CD4-positive, alpha-beta memory T cell (primary cell): ENCODE measurements at regions of chr16 and their contacts with region 1.

Region 1: GRCh38 chr16:74623214-74623842 is 16.4 kb upstream of the GLG1 start:
- DNase-seq: peak in 4 of 5 donors; percentile 47 to 54 (median 52)
- H3K4me3 ChIP-seq: no peak overlapping the region
- H3K4me3 Mint-ChIP-seq: no peak overlapping the region
- H3K27ac ChIP-seq: no peak overlapping the region
- H3K27ac Mint-ChIP-seq: peak overlapping the region in 5 of 7 donors; percentile 48 to 80 (median 54)
- H3K4me1 ChIP-seq: no peaks in the 10 kb centered on the region
- H3K4me1 Mint-ChIP-seq: peaks cover 4 to 8% (median 6%) of the 10 kb centered on the region in 4 donors
- H3K27me3 ChIP-seq: no peaks in the 10 kb centered on the region
- H3K27me3 Mint-ChIP-seq: no peaks in the 10 kb centered on the region

Region 2: GRCh38 chr16:74466872-74467271 is 156.5 kb before region 1 on chr16:
- CTCF ChIA-PET with region 1: interaction called, 13 read pairs
- POLR2A ChIA-PET with region 1: no interaction called
- intact Hi-C with region 1: loop called (anchors 5 kb)
- DNase-seq: peak in 4 of 5 donors; percentile 7 to 22 (median 19)
- H3K4me3 ChIP-seq: no peak overlapping the region
- H3K4me3 Mint-ChIP-seq: peak overlapping the region in 6 of 8 donors; percentile 6 to 59 (median 43)
- H3K27ac ChIP-seq: no peak overlapping the region
- H3K27ac Mint-ChIP-seq: peak overlapping the region; percentile 26 to 94 (median 72)
- H3K4me1 ChIP-seq: peaks cover 20% of the 10 kb centered on the region
- H3K4me1 Mint-ChIP-seq: peaks cover 17 to 33% (median 22%) of the 10 kb centered on the region in 4 donors
- H3K27me3 ChIP-seq: no peaks in the 10 kb centered on the region
- H3K27me3 Mint-ChIP-seq: no peaks in the 10 kb centered on the region

Region 3: GRCh38 chr16:74492976-74493375 is 130.4 kb before region 1 on chr16:
- CTCF ChIA-PET with region 1: interaction called, 19 read pairs
- POLR2A ChIA-PET with region 1: interaction called, 4 read pairs
- intact Hi-C with region 1: loop called (anchors 1 kb)
- DNase-seq: no peak
- H3K4me3 ChIP-seq: no peak overlapping the region
- H3K4me3 Mint-ChIP-seq: no peak overlapping the region
- H3K27ac ChIP-seq: no peak overlapping the region
- H3K27ac Mint-ChIP-seq: no peak overlapping the region
- H3K4me1 ChIP-seq: no peaks in the 10 kb centered on the region
- H3K4me1 Mint-ChIP-seq: peaks cover 1 to 12% (median 5%) of the 10 kb centered on the region in 4 donors
- H3K27me3 ChIP-seq: no peaks in the 10 kb centered on the region
- H3K27me3 Mint-ChIP-seq: no peaks in the 10 kb centered on the region

Region 4: GRCh38 chr16:74695450-74696422 is 72.4 kb after region 1 on chr16:
- CTCF ChIA-PET with region 1: no interaction called
- POLR2A ChIA-PET with region 1: no interaction called
- intact Hi-C with region 1: no loop called
- DNase-seq: peak; percentile 63 to 72 (median 67)
- H3K4me3 ChIP-seq: peak overlapping the region; percentile 24 to 46
- H3K4me3 Mint-ChIP-seq: peak overlapping the region; percentile 79 to 88 (median 86)
- H3K27ac ChIP-seq: peak overlapping the region; percentile 0
- H3K27ac Mint-ChIP-seq: peak overlapping the region; percentile 53 to 90 (median 84)
- H3K4me1 ChIP-seq: peaks cover 34% of the 10 kb centered on the region
- H3K4me1 Mint-ChIP-seq: peaks cover 31 to 66% (median 48%) of the 10 kb centered on the region in 4 donors
- H3K27me3 ChIP-seq: no peaks in the 10 kb centered on the region
- H3K27me3 Mint-ChIP-seq: no peaks in the 10 kb centered on the region

Region 5: GRCh38 chr16:76081967-76082366 is 1458.6 kb after region 1 on chr16:
- CTCF ChIA-PET with region 1: no interaction called
- POLR2A ChIA-PET with region 1: no interaction called
- intact Hi-C with region 1: no loop called
- DNase-seq: no peak
- H3K4me3 ChIP-seq: no peak overlapping the region
- H3K4me3 Mint-ChIP-seq: no peak overlapping the region
- H3K27ac ChIP-seq: no peak overlapping the region
- H3K27ac Mint-ChIP-seq: no peak overlapping the region
- H3K4me1 ChIP-seq: no peaks in the 10 kb centered on the region
- H3K4me1 Mint-ChIP-seq: no peaks in the 10 kb centered on the region
- H3K27me3 ChIP-seq: no peaks in the 10 kb centered on the region
- H3K27me3 Mint-ChIP-seq: no peaks in the 10 kb centered on the region